CD14-positive monocyte (primary cell): ENCODE measurements at regions of chr22 and their contacts with region 1.

Region 1: DNA sequence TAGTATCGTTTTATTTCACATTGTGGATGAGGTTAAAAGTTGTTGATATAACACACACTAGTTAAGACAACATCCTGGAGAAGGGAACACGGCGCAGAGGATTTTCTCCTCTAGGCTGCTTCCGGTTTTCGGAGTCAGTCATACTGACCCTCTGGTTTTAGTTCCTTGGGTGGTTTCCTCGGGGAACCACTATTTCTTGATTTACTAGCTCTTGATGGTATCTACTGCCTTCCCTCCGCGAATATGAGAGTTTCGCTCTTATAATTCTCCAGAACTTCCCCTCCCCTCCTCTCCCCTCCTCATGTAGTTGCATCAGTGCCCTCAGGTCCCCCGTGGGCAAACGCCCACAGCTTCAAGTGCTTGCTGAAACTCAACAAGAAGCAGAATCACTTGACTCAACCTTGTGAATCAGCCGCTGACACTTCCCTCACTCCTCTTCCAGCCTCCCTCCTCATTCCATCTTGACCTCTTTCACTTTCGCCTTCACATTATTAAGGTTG is 15.9 kb upstream of the APOBEC3A start:
- DNase-seq: peak; percentile 94 to 99 (median 97)
- H3K4me3 ChIP-seq: peak overlapping the region; percentile 13 to 63 (median 26)
- H3K4me3 Mint-ChIP-seq: peak overlapping the region; percentile 70 to 74
- H3K27ac ChIP-seq: peak overlapping the region; percentile 79 to 95
- H3K27ac Mint-ChIP-seq: peak overlapping the region; percentile 97 to 99 (median 99)
- H3K4me1 ChIP-seq: peaks cover 62 to 67% of the 10 kb centered on the region in 2 donors
- H3K4me1 Mint-ChIP-seq: peaks cover 66% of the 10 kb centered on the region
- H3K27me3 ChIP-seq: no peaks in the 10 kb centered on the region
- H3K27me3 Mint-ChIP-seq: peaks cover 16 to 24% (median 22%) of the 10 kb centered on the region in 3 donors
- CTCF ChIP-seq: no peak

Region 2: DNA sequence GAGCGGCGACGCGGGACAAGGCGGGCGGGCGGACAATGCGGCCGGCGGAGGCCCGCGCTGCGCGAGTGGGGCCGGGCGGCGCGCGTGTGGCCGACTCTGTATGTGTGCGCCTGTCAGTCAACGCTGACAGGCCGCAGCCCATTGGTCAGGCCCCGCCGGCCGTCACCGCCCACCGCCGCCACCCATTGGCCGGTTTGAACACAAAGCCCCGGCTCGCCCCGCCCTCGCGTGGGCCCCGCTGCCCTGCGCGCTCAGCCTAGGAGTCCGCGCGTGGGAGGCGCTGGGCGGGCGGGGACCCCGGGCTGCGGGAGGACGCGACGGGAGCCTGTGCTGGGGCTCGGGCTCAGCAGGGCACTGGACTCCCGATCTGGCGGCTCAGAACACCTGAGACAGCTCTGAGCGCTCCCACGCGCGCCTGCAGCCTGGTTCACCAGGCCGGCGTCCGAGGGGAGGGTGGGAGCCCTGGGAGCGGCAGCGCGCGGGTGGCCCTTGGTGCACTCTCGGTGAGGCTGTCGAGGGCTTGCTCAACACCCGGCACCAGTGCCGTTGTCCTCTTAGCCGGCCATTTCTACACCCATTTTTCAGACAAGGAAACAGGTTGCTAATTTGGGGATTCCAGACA is 185.5 kb before region 1 on chr22 and contains the start of gene SUN2:
- intact Hi-C with region 1: loop called in 1 of 2 experiments (anchors 10 kb)
- DNase-seq: peak; percentile 89 to 90 (median 90)
- H3K4me3 ChIP-seq: peak within 1 kb of the TSS; percentile 88 to 98 (median 92)
- H3K4me3 Mint-ChIP-seq: peak within 1 kb of the TSS; percentile 93 to 97
- H3K27ac ChIP-seq: peak within 1 kb of the TSS; percentile 99 to 100
- H3K27ac Mint-ChIP-seq: peak within 1 kb of the TSS; percentile 98 to 100 (median 99)
- H3K4me1 ChIP-seq: peaks cover 64 to 70% of the 10 kb centered on the region in 2 donors
- H3K4me1 Mint-ChIP-seq: peaks cover 68% of the 10 kb centered on the region
- H3K27me3 ChIP-seq: no peaks in the 10 kb centered on the region
- H3K27me3 Mint-ChIP-seq: peaks cover 0 to 3% (median 0%) of the 10 kb centered on the region in 3 donors
- CTCF ChIP-seq: no peak
- polyA plus RNA-seq, gene SUN2: 95.8 to 159 (median 97.8) TPM

Region 3: DNA sequence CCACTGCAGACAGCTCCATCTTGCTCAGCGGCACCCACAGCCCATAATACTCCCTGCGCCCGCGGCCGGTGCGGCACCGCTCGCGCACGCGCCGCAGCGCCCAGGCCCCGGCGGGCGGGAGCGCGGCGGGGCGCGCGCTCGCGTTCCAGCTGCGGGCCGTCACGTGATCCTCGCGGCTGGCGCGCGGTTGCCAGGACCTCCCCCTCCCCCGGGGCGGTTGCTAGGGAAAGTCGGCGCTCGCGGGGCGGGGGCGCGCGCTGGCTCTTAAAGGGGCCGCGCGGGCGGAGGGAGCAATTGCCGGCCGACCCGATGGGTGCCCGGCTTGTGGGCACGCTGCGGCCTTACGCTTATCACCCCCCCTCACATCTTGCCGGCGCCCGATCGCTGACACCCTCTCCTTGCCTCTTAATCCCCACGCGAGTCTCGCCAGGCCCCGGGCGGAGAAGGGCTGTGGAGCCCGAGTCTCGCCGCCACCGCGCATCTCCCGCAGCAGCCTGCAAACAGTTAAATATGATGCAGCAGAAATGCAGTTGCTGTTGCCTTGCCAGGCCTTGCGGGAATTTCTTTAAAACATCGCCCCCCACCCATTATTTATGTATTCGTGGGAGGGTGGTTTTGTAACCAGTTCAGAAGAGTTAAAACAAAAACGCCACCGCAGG is 69.2 kb before region 1 on chr22 and contains the start of gene CBX6:
- intact Hi-C with region 1: no loop called
- DNase-seq: peak; percentile 86 to 91 (median 87)
- H3K4me3 ChIP-seq: peak within 1 kb of the TSS; percentile 90 to 95 (median 93)
- H3K4me3 Mint-ChIP-seq: peak within 1 kb of the TSS; percentile 95
- H3K27ac ChIP-seq: peak within 1 kb of the TSS; percentile 63 to 75
- H3K27ac Mint-ChIP-seq: peak within 1 kb of the TSS; percentile 87 to 97 (median 92)
- H3K4me1 ChIP-seq: peaks cover 29 to 43% of the 10 kb centered on the region in 2 donors
- H3K4me1 Mint-ChIP-seq: peaks cover 32% of the 10 kb centered on the region
- H3K27me3 ChIP-seq: peaks cover 0 to 16% of the 10 kb centered on the region in 2 donors
- H3K27me3 Mint-ChIP-seq: peaks cover 9 to 27% (median 24%) of the 10 kb centered on the region in 3 donors
- CTCF ChIP-seq: no peak
- polyA plus RNA-seq, gene CBX6: 2.1 to 26.7 (median 5.0) TPM

Region 4: GRCh38 chr22:38953577-38954413 is 12.3 kb after region 1 on chr22:
- intact Hi-C with region 1: loop called in 1 of 2 experiments (anchors 2 kb)
- DNase-seq: peak; percentile 98 to 99 (median 99)
- H3K4me3 ChIP-seq: peak overlapping the region; percentile 3 to 71 (median 30)
- H3K4me3 Mint-ChIP-seq: peak overlapping the region; percentile 82 to 95
- H3K27ac ChIP-seq: peak overlapping the region; percentile 95 to 100
- H3K27ac Mint-ChIP-seq: peak overlapping the region; percentile 99 to 100 (median 100)
- H3K4me1 ChIP-seq: peaks cover 84 to 94% of the 10 kb centered on the region in 2 donors
- H3K4me1 Mint-ChIP-seq: peaks cover 87% of the 10 kb centered on the region
- H3K27me3 ChIP-seq: no peaks in the 10 kb centered on the region
- H3K27me3 Mint-ChIP-seq: peaks cover 0 to 13% (median 1%) of the 10 kb centered on the region in 3 donors
- CTCF ChIP-seq: no peak

Region 5: GRCh38 chr22:38967451-38968450 is 26.2 kb after region 1 on chr22:
- intact Hi-C with region 1: loop called (anchors 1 to 5 kb)
- DNase-seq: peak; percentile 98 to 100 (median 99)
- H3K4me3 ChIP-seq: peak overlapping the region in 1 of 3 experiments; percentile 33
- H3K4me3 Mint-ChIP-seq: peak overlapping the region in 1 of 2 donors; percentile 64
- H3K27ac ChIP-seq: peak overlapping the region; percentile 80 to 88
- H3K27ac Mint-ChIP-seq: peak overlapping the region; percentile 91 to 99 (median 97)
- H3K4me1 ChIP-seq: peaks cover 86 to 95% of the 10 kb centered on the region in 2 donors
- H3K4me1 Mint-ChIP-seq: peaks cover 94% of the 10 kb centered on the region
- H3K27me3 ChIP-seq: no peaks in the 10 kb centered on the region
- H3K27me3 Mint-ChIP-seq: peaks cover 3 to 8% (median 4%) of the 10 kb centered on the region in 3 donors
- CTCF ChIP-seq: no peak

Region 6: GRCh38 chr22:39277155-39277607 is 335.6 kb after region 1 on chr22:
- intact Hi-C with region 1: loop called in 1 of 2 experiments (anchors 5 kb)
- DNase-seq: peak; percentile 61 to 83 (median 72)
- H3K4me3 ChIP-seq: peak overlapping the region in 1 of 3 experiments; percentile 11
- H3K4me3 Mint-ChIP-seq: peak overlapping the region in 1 of 2 donors; percentile 63
- H3K27ac ChIP-seq: peak overlapping the region in 1 of 2 donors; percentile 77
- H3K27ac Mint-ChIP-seq: peak overlapping the region; percentile 81 to 96 (median 90)
- H3K4me1 ChIP-seq: peaks cover 33 to 44% of the 10 kb centered on the region in 2 donors
- H3K4me1 Mint-ChIP-seq: peaks cover 42% of the 10 kb centered on the region
- H3K27me3 ChIP-seq: peaks cover 3 to 31% of the 10 kb centered on the region in 2 donors
- H3K27me3 Mint-ChIP-seq: peaks cover 32 to 54% (median 50%) of the 10 kb centered on the region in 3 donors
- CTCF ChIP-seq: no peak